Tibial artery (tissue), 4 donors: ENCODE measurements at regions of chr2 and their contacts with region 1.

Region 1: GRCh38 chr2:1688859-1689258 is 55.5 kb downstream of the PXDN start:
- DNase-seq: no peak
- H3K4me3 ChIP-seq: no peak overlapping the region
- H3K27ac ChIP-seq: no peak overlapping the region
- H3K4me1 ChIP-seq: peaks cover 0 to 8% (median 1%) of the 10 kb centered on the region in 4 donors
- H3K27me3 ChIP-seq: no peaks in the 10 kb centered on the region
- CTCF ChIP-seq: no peak

Region 2: DNA sequence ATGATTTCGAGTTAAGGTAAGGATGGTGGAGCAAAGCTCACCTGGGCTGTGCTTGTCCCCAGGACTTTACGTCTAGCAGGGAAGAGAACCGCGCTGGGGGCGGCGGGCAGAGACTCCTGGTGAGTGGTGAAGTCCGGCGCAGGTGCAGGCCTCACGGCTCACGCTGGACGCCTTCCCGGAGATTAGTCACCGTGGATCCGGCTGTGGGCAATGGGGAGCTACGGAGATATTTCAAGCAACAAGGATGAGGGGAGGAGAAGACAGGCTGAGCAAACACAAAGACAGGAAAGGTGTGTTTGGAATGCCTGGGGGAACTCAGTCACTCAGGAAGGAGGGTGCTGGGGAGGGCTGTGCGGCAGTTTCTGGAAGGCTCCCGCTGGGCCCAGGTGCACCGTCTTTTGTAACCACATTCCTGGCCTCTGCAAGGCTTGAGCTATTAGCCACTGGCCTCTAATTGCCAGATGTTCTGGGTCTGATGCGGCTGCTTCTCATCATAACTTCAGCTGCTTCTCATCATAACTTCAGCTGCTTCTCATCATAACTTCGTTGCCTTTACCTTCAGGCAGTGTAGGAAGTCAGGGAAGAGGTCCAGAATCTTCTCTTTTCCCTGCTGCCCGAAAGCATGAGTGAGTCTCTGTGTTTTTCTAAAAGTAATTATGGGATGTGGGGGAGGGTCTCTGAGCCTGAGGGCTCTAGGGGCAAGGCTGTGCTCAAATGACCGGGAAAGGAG is 63.5 kb before region 1 on chr2:
- intact Hi-C with region 1: no loop called
- DNase-seq: no peak
- H3K4me3 ChIP-seq: no peak overlapping the region
- H3K27ac ChIP-seq: no peak overlapping the region
- H3K4me1 ChIP-seq: peaks cover 0 to 28% (median 20%) of the 10 kb centered on the region in 4 donors
- H3K27me3 ChIP-seq: no peaks in the 10 kb centered on the region
- CTCF ChIP-seq: no peak

Region 3: DNA sequence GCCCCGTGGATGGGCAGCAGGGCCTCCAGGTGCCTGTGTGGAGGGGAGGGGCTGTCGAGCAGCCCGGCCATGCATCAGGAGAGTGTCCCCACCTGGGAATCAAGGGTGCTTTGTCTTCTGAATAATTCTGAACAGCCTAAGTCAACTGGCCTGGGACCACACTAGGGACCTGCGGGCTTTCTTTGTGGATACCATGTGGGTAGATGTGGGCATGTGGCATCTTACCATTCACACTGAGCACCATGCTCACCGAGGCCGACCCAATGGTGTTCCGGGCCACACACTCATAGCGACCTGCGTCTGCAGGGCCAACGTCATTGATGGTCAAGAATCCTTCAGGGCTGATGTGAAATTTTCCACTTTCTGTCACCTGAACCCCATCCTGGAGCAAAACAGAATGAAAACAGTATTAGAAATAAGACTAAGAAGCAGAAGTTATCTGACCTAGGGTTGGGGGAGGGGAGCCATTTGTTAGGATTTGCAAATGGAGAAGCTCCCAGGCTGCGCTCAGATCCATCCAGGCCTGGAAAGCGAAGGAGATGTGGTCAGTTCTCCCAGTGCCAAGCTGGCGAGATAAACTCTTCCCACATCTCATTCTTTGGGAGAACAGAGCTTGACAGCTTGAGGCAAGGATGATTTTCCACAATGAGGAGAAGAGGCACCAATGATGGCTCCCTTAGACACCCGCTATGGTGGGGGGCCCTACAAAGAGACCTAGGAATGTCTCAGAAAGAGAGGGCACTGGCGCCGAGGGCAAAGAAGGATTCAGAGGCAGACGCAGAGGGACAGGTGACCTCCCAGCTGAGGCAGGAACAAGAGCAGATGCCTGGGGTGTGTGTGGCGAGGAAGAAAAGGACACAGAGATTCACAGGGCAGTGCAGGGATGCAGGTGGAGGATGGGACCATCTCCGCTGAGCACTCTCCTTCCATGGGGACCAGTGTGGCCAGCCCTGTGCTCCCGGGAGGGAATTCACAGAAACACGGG is 27.9 kb before region 1 on chr2:
- intact Hi-C with region 1: loop called (anchors 1 kb)
- DNase-seq: peak in 1 of 2 donors; percentile 12
- H3K4me3 ChIP-seq: no peak overlapping the region
- H3K27ac ChIP-seq: no peak overlapping the region
- H3K4me1 ChIP-seq: peaks cover 0 to 15% (median 8%) of the 10 kb centered on the region in 4 donors
- H3K27me3 ChIP-seq: no peaks in the 10 kb centered on the region
- CTCF ChIP-seq: no peak